HepG2 (cell line): ENCODE measurements at regions of chr4 and their contacts with region 1.

Region 1: GRCh38 chr4:184263910-184264732 is 46.4 kb upstream of the ENPP6 start:
- DNase-seq: peak; percentile 87
- ATAC-seq: peak; percentile 84
- H3K4me3 ChIP-seq: no peak overlapping the region
- H3K27ac ChIP-seq: no peak overlapping the region
- H3K4me1 ChIP-seq: peaks cover 34% of the 10 kb centered on the region
- H3K27me3 ChIP-seq: no peaks in the 10 kb centered on the region
- CTCF ChIP-seq: peak; percentile 87
- EP300 ChIP-seq: no peak; a peak in 1 of 4 replicates
- POLR2A ChIP-seq: no peak
- RAD21 ChIP-seq: peak; percentile 87

Region 2: GRCh38 chr4:184355111-184355604 is 91.0 kb after region 1 on chr4:
- CTCF ChIA-PET with region 1: no interaction called
- POLR2A ChIA-PET with region 1: no interaction called
- in situ Hi-C with region 1: no loop called
- intact Hi-C with region 1: no loop called
- DNase-seq: peak; percentile 89
- ATAC-seq: peak; percentile 64
- H3K4me3 ChIP-seq: no peak overlapping the region
- H3K27ac ChIP-seq: peak overlapping the region; percentile 30
- H3K4me1 ChIP-seq: peaks cover 71% of the 10 kb centered on the region
- H3K27me3 ChIP-seq: no peaks in the 10 kb centered on the region
- CTCF ChIP-seq: no peak
- EP300 ChIP-seq: peak in 1 of 2 experiments; percentile 49; a peak in 1 of 4 replicates
- POLR2A ChIP-seq: no peak
- RAD21 ChIP-seq: no peak

Region 3: DNA sequence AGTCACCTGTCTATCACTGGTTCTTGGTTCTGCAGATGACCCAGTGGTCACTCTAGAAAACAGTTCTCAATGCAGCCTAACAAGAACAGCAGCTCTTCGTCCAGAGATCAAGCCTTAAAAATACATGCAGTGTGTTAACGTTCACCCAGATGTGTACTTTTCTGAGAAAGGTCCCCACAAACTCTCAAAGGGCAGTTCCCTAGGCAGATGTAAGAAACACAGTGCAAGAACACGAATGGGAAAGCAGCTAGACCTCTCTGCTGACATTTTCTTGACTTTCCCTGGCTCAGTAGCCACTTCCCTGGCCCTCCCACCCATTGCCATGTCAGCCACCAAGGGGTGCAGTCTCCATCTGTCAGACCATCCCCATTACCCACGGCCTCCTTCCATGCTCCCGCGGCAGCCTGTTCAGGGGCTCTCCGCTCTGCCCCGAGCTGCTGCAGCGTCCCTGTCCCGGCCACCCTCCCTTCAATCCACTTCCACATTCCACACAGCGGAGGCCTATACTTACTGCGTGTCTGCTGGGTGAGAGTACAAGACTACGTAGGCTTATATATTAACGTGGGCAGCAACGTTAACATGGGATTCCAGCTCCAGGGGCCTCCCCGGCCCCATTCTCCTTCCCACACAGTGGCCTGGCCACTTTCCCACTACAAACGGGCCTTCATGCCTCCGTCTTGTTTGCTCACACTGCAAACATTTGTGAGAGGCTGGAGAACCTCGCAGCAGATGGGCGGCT is 175.9 kb after region 1 on chr4:
- CTCF ChIA-PET with region 1: no interaction called
- POLR2A ChIA-PET with region 1: no interaction called
- in situ Hi-C with region 1: no loop called
- intact Hi-C with region 1: loop called (anchors 1 kb)
- DNase-seq: peak; percentile 79
- ATAC-seq: peak; percentile 94
- H3K4me3 ChIP-seq: peak overlapping the region; percentile 51 to 70 (median 55)
- H3K27ac ChIP-seq: peak overlapping the region; percentile 84
- H3K4me1 ChIP-seq: peaks cover 63% of the 10 kb centered on the region
- H3K27me3 ChIP-seq: no peaks in the 10 kb centered on the region
- CTCF ChIP-seq: 0 out of 2 replicates have a peak, but pooled peaks have one; percentile 2
- EP300 ChIP-seq: peak in 1 of 2 experiments; percentile 55; a peak in 2 of 4 replicates
- POLR2A ChIP-seq: peak in 1 of 2 experiments; percentile 58; a peak in 3 of 4 replicates
- RAD21 ChIP-seq: peak; percentile 25; the same call in 1 of the 2 replicates

Region 4: GRCh38 chr4:184538023-184538599 is 274.0 kb after region 1 on chr4:
- CTCF ChIA-PET with region 1: interaction called, 34 read pairs
- POLR2A ChIA-PET with region 1: interaction called, 14 read pairs
- in situ Hi-C with region 1: loop called (anchors 5 kb)
- intact Hi-C with region 1: loop called (anchors 1 kb)
- DNase-seq: peak; percentile 85
- ATAC-seq: peak; percentile 92
- H3K4me3 ChIP-seq: peak overlapping the region; percentile 75 to 98 (median 87)
- H3K27ac ChIP-seq: peak overlapping the region; percentile 71
- H3K4me1 ChIP-seq: peaks cover 41% of the 10 kb centered on the region
- H3K27me3 ChIP-seq: no peaks in the 10 kb centered on the region; a peak in 1 of 5 replicates
- CTCF ChIP-seq: peak; percentile 92
- EP300 ChIP-seq: no peak
- POLR2A ChIP-seq: no peak
- RAD21 ChIP-seq: peak; percentile 93

Region 5: GRCh38 chr4:184632842-184633241 is 368.7 kb after region 1 on chr4:
- CTCF ChIA-PET with region 1: no interaction called
- POLR2A ChIA-PET with region 1: no interaction called
- in situ Hi-C with region 1: no loop called
- intact Hi-C with region 1: no loop called
- DNase-seq: no peak
- ATAC-seq: no peak
- H3K4me3 ChIP-seq: no peak overlapping the region
- H3K27ac ChIP-seq: no peak overlapping the region
- H3K4me1 ChIP-seq: peaks cover 23% of the 10 kb centered on the region
- H3K27me3 ChIP-seq: no peaks in the 10 kb centered on the region
- CTCF ChIP-seq: no peak
- EP300 ChIP-seq: no peak
- POLR2A ChIP-seq: no peak
- RAD21 ChIP-seq: no peak

Region 6: DNA sequence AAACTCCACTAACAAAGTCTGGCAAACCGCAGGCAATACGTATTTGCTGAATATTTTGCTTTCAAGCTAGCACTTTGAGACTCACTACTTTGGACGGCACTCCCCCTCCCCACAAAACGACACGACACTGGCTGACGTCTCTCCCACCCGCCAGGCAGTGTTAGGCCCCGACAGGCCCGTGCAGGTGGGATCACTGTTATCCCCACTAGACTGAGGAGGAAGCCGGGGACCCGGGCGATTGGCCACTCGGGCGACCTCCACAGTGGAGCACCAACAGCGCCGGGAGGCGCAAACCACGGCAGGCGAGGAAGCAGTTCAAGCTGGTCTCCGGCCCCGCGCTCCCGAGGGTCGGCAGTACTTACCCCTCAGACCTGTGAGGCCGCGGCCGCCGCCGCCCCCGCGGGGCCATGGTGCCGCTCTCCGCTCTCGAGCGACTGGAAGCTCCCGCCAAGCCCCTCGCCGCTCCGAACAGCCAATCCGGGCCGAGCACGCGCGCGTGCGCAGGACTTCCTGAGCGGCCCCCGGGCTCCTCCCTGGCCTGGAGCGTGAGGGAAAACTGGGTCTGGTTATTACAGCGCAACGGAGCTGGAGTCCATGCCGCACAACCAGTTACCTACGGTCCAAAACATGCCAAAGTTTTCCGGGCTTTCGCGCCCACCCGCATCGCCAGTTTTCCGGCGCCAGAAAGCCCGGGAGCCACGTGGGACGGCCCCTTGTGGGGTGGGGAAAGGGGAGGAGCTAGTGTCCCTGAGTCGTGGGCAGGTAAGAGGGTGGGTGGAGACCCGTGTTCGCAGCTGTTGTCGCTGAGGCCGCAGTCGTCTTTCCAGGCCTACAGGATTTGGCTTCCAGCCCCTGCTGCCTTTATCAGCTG is 469.8 kb after region 1 on chr4 and contains the start of gene CENPU:
- CTCF ChIA-PET with region 1: no interaction called
- POLR2A ChIA-PET with region 1: interaction called, 3 read pairs
- in situ Hi-C with region 1: no loop called
- intact Hi-C with region 1: loop called (anchors 10 kb)
- DNase-seq: peak; percentile 97
- ATAC-seq: peak; percentile 94
- H3K4me3 ChIP-seq: peak within 1 kb of the TSS; percentile 73 to 92 (median 88)
- H3K27ac ChIP-seq: peak within 1 kb of the TSS; percentile 80
- H3K4me1 ChIP-seq: peaks cover 51% of the 10 kb centered on the region
- H3K27me3 ChIP-seq: no peaks in the 10 kb centered on the region
- CTCF ChIP-seq: no peak
- EP300 ChIP-seq: peak; percentile 66 to 67; a peak in 2 of 4 replicates
- POLR2A ChIP-seq: peak; percentile 70 to 80
- RAD21 ChIP-seq: peak; percentile 71
- total RNA-seq, gene CENPU: 35.8 and 39.5 TPM in 2 replicates